Heart right ventricle (tissue), 16 donors: ENCODE measurements at regions of chr16 and their contacts with region 1.

Region 1: GRCh38 chr16:5604770-5605169 is 507.2 kb upstream of the EEF2KMT start:
- DNase-seq: no peak
- ATAC-seq: no peak
- H3K4me3 ChIP-seq: no peak overlapping the region
- H3K27ac ChIP-seq: no peak overlapping the region
- H3K4me1 ChIP-seq: no peaks in the 10 kb centered on the region
- H3K27me3 ChIP-seq: peaks cover 0 to 18% (median 4%) of the 10 kb centered on the region in 7 donors
- CTCF ChIP-seq: peak in 1 of 9 donors; percentile 10

Region 2: GRCh38 chr16:4293822-4294457 is 1310.8 kb before region 1 on chr16:
- intact Hi-C with region 1: no loop called
- DNase-seq: peak; percentile 51 to 52
- ATAC-seq: peak; percentile 74 to 88 (median 80)
- H3K4me3 ChIP-seq: peak overlapping the region in 2 of 10 donors; percentile 6 to 18
- H3K27ac ChIP-seq: peak overlapping the region in 8 of 10 donors; percentile 2 to 67 (median 40)
- H3K4me1 ChIP-seq: peaks cover 10 to 44% (median 36%) of the 10 kb centered on the region in 9 donors
- H3K27me3 ChIP-seq: no peaks in the 10 kb centered on the region
- CTCF ChIP-seq: no peak

Region 3: GRCh38 chr16:5252791-5253190 is 352.0 kb before region 1 on chr16:
- intact Hi-C with region 1: loop called in 1 of 10 experiments (anchors 10 kb)
- DNase-seq: no peak
- ATAC-seq: no peak
- H3K4me3 ChIP-seq: no peak overlapping the region
- H3K27ac ChIP-seq: no peak overlapping the region
- H3K4me1 ChIP-seq: no peaks in the 10 kb centered on the region
- H3K27me3 ChIP-seq: peaks cover 0 to 7% (median 0%) of the 10 kb centered on the region in 7 donors
- CTCF ChIP-seq: no peak

Region 4: GRCh38 chr16:5509793-5510192 is 95.0 kb before region 1 on chr16:
- intact Hi-C with region 1: no loop called
- DNase-seq: no peak
- ATAC-seq: no peak
- H3K4me3 ChIP-seq: no peak overlapping the region
- H3K27ac ChIP-seq: no peak overlapping the region
- H3K4me1 ChIP-seq: no peaks in the 10 kb centered on the region
- H3K27me3 ChIP-seq: peaks cover 0 to 17% (median 6%) of the 10 kb centered on the region in 7 donors
- CTCF ChIP-seq: no peak

Region 5: DNA sequence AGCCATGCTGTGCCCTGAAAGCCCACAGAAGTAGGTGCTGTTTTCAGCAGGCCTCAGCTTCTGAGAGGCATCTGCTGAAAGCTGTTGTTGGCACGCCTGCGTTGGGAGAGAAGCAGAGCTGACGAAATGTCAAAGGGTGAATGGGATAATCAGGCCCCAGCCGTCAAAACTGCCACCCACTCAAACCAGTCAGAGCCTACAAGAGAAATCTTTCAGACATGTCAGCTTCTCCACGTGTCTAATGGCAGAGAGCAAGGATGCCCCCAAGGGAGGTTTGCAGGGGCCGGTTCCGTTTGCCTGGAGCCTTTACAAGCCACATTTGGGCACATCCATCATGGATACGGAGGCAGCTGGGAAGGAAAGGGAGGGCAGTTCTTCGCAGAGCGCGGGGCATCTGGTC is 61.1 kb after region 1 on chr16:
- intact Hi-C with region 1: loop called in 1 of 10 experiments (anchors 10 kb)
- DNase-seq: no peak
- ATAC-seq: no peak
- H3K4me3 ChIP-seq: no peak overlapping the region
- H3K27ac ChIP-seq: no peak overlapping the region
- H3K4me1 ChIP-seq: no peaks in the 10 kb centered on the region
- H3K27me3 ChIP-seq: peaks cover 0 to 12% (median 2%) of the 10 kb centered on the region in 7 donors
- CTCF ChIP-seq: no peak

Region 6: GRCh38 chr16:5928476-5929065 is 323.8 kb after region 1 on chr16:
- intact Hi-C with region 1: no loop called
- DNase-seq: no peak
- ATAC-seq: no peak
- H3K4me3 ChIP-seq: no peak overlapping the region
- H3K27ac ChIP-seq: no peak overlapping the region
- H3K4me1 ChIP-seq: no peaks in the 10 kb centered on the region
- H3K27me3 ChIP-seq: peaks cover 0 to 10% (median 0%) of the 10 kb centered on the region in 7 donors
- CTCF ChIP-seq: no peak

Region 7: GRCh38 chr16:6317934-6318333 is 713.2 kb after region 1 on chr16:
- intact Hi-C with region 1: no loop called
- DNase-seq: no peak
- ATAC-seq: no peak
- H3K4me3 ChIP-seq: no peak overlapping the region
- H3K27ac ChIP-seq: no peak overlapping the region
- H3K4me1 ChIP-seq: no peaks in the 10 kb centered on the region
- H3K27me3 ChIP-seq: no peaks in the 10 kb centered on the region
- CTCF ChIP-seq: no peak